H1 (cell line): ENCODE measurements at regions of chr6 and their contacts with region 1.

Region 1: DNA sequence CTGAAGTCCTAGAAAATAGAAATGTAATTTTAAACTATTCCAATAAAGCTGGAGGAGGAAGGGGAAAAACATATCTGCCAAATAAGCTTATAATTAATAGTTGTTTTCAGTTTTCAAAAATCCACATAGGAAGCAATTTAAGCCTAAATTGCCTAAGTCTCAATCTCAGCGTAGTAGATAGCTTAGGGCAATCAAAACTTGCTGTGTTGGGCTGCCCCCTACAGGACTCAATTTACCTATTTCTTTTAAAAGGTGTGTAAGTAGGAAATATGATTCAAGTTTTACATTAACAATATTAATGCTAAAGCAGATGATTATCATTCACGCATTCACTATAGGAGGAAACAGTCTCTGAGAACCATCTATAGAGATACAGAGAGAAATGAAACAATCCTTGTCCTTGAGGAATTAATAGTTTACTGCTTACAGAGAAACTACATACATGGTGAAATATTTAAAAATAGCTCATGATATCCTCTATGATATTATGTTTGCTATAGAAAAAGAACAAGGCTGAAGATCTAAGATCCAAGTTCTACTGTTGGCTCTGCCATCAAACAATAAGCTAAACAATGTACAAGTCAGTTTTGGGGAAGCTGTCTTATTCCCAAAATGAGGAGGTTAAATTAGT is 102.1 kb downstream of the ATG5 start:
- DNase-seq: no peak
- H3K4me3 ChIP-seq: no peak overlapping the region
- H3K27ac ChIP-seq: no peak overlapping the region
- H3K4me1 ChIP-seq: no peaks in the 10 kb centered on the region
- H3K27me3 ChIP-seq: no peaks in the 10 kb centered on the region
- CTCF ChIP-seq: peak in 2 of 3 experiments; percentile 53 to 68; a peak in 3 of 4 replicates
- EP300 ChIP-seq: no peak
- POLR2A ChIP-seq: no peak
- RAD21 ChIP-seq: peak; percentile 84

Region 2: GRCh38 chr6:105431226-105431625 is 792.2 kb before region 1 on chr6:
- CTCF ChIA-PET with region 1: interaction called, 14 read pairs
- POLR2A ChIA-PET with region 1: no interaction called
- DNase-seq: no peak
- H3K4me3 ChIP-seq: no peak overlapping the region
- H3K27ac ChIP-seq: no peak overlapping the region
- H3K4me1 ChIP-seq: peaks cover 0 to 3% (median 0%) of the 10 kb centered on the region in 4 experiments; a peak in 1 of 7 replicates
- H3K27me3 ChIP-seq: no peaks in the 10 kb centered on the region
- CTCF ChIP-seq: peak in 2 of 3 experiments; percentile 43 to 44; a peak in 2 of 4 replicates
- EP300 ChIP-seq: no peak
- POLR2A ChIP-seq: no peak
- RAD21 ChIP-seq: peak; percentile 68 to 70

Region 3: DNA sequence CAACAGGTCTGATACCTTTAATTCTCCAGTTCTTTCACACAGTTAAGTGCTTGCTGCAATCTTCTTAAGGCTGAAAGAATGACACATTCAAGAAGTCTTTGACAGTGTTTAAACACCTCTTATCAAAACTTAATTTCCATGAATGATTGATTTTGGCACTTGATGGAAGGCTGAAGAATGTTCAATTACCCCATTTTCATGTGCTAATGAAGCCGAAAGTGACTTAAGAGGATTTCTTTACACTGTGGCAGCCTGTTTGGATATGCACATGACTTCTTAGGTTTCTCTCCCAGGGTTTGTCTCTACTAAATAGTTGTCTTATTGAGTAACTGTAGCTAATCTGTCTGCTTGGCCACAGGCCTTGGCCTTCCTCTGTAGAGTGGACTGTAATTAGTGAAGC is 218.4 kb before region 1 on chr6:
- CTCF ChIA-PET with region 1: no interaction called
- POLR2A ChIA-PET with region 1: no interaction called
- DNase-seq: no peak
- H3K4me3 ChIP-seq: no peak overlapping the region
- H3K27ac ChIP-seq: no peak overlapping the region
- H3K4me1 ChIP-seq: peaks cover 2 to 17% (median 9%) of the 10 kb centered on the region in 4 experiments; a peak in 6 of 7 replicates
- H3K27me3 ChIP-seq: peaks cover 0 to 1% (median 0%) of the 10 kb centered on the region in 4 experiments; a peak in 3 of 7 replicates
- CTCF ChIP-seq: no peak
- EP300 ChIP-seq: no peak
- POLR2A ChIP-seq: no peak
- RAD21 ChIP-seq: no peak

Region 4: DNA sequence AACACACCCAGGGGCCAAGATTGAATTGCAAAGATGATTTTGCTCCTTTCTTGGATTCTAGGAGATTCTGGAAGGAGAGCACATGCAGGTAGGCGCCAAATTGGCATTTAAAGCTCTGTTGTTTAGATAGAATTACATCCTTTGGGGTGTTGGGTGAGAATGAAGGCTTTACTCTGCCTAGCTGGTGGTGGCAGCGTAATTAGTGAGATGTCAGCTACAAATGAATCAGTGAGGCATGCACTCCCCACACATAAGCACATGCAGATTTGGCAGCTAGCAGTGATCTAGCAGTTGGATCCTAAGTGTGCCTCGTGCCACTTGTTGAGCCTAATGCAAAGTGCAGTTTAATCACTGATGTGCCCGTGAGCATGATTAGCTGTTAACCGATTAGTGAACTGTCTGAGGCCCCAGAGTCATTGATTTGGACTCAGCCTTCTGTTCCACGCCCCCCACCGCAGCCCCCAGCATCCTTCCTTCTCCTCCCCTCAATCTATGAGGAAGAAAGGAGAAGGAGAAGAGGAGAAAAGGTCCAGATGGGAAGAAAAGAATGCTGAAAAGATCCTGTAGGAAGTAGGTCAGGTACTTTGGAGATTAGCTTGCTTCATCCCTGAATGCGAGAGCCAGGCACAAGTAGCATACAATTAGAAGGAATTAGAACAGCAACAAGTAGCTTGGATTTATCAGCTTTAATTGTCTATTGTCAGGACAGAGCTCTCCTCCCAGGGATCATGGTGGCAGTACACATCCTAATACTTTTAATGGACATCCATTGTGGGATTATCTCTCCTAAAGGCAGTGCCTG is 143.3 kb before region 1 on chr6:
- CTCF ChIA-PET with region 1: interaction called, 10 read pairs
- POLR2A ChIA-PET with region 1: no interaction called
- DNase-seq: no peak
- H3K4me3 ChIP-seq: no peak overlapping the region
- H3K27ac ChIP-seq: no peak overlapping the region
- H3K4me1 ChIP-seq: peaks cover under 1 to 10% (median 3%) of the 10 kb centered on the region in 4 experiments; a peak in 4 of 7 replicates
- H3K27me3 ChIP-seq: peaks cover 0 to under 1% (median 0%) of the 10 kb centered on the region in 4 experiments; a peak in 2 of 7 replicates
- CTCF ChIP-seq: no peak
- EP300 ChIP-seq: no peak
- POLR2A ChIP-seq: no peak
- RAD21 ChIP-seq: no peak

Region 5: DNA sequence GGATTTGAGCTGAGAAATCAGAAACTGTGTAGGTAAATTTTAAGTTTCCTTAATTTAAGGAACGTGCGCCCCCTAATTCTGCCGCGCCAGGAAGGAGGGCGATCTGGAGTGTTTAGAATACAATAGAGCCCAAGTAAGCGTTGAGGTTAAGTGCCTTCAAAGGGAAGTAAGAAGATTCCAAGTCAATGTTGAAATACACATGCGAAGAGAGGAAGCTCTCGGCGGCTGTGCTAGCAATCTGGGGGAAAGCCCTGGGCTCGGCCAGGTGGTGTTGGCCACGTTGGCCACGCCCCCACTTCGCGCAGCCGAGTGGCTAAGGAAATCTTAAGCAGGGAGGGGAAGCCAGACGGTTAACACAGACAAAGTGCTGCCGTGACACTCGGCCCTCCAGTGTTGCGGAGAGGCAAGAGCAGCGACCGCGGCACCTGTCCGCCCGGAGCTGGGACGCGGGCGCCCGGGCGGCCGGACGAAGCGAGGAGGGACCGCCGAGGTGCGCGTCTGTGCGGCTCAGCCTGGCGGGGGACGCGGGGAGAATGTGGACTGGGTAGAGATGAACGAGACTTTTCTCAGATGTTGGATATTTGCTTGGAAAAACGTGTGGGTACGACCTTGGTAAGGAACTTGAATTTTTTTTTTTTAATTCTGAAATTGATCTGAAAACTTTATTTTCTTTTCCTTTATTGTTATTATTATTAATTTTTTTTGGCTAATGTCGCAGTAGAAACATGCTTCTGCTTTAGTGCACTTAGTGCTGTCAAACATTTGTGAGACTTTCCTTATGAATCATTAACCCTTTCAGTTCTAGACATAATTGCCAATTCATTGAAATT is 137.2 kb before region 1 on chr6 and contains the start of gene PRDM1:
- CTCF ChIA-PET with region 1: interaction called, 18 read pairs
- POLR2A ChIA-PET with region 1: no interaction called
- DNase-seq: peak; percentile 44 to 82
- H3K4me3 ChIP-seq: peak within 1 kb of the TSS; percentile 42 to 68 (median 65)
- H3K27ac ChIP-seq: no peak within 1 kb of the TSS
- H3K4me1 ChIP-seq: peaks cover 5 to 16% (median 10%) of the 10 kb centered on the region in 4 experiments; a peak in 6 of 7 replicates
- H3K27me3 ChIP-seq: peaks cover 0 to 20% (median 3%) of the 10 kb centered on the region in 4 experiments; a peak in 3 of 7 replicates
- CTCF ChIP-seq: peak; percentile 25 to 45 (median 45); a peak in 3 of 4 replicates
- EP300 ChIP-seq: no peak
- POLR2A ChIP-seq: no peak
- RAD21 ChIP-seq: peak; percentile 52 to 65
- total RNA-seq, gene PRDM1: 0.74 and 1.1 TPM in 2 replicates

Region 6: GRCh38 chr6:106141441-106142237 is 81.8 kb before region 1 on chr6:
- CTCF ChIA-PET with region 1: interaction called, 40 read pairs
- POLR2A ChIA-PET with region 1: no interaction called
- DNase-seq: no peak
- H3K4me3 ChIP-seq: no peak overlapping the region
- H3K27ac ChIP-seq: no peak overlapping the region
- H3K4me1 ChIP-seq: peaks cover 0 to 8% (median 7%) of the 10 kb centered on the region in 4 experiments; a peak in 4 of 7 replicates
- H3K27me3 ChIP-seq: peaks cover 0 to 1% (median 0%) of the 10 kb centered on the region in 4 experiments; a peak in 1 of 7 replicates
- CTCF ChIP-seq: no peak
- EP300 ChIP-seq: no peak
- POLR2A ChIP-seq: no peak
- RAD21 ChIP-seq: no peak

Region 7: DNA sequence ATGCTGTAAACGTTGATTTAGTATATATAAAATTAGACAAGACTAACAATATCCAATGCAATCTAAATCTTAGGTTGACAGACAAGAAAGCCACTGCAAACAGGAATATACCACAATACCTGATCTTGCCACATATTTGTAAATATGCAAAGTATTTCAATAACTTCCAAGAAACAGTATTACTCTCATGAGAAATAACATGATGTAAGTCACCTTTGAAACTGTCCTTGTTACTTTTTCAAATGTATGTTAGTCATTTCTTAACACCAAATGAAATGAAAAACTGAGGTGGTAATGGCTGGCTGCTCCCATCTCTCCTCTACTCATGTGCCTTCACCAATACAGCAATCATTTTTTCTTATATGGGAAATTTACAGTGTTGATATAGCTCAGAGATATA is 16.5 kb before region 1 on chr6:
- CTCF ChIA-PET with region 1: interaction called, 13 read pairs
- POLR2A ChIA-PET with region 1: no interaction called
- DNase-seq: no peak
- H3K4me3 ChIP-seq: no peak overlapping the region
- H3K27ac ChIP-seq: no peak overlapping the region
- H3K4me1 ChIP-seq: no peaks in the 10 kb centered on the region; a peak in 1 of 7 replicates
- H3K27me3 ChIP-seq: no peaks in the 10 kb centered on the region
- CTCF ChIP-seq: no peak
- EP300 ChIP-seq: no peak
- POLR2A ChIP-seq: no peak
- RAD21 ChIP-seq: no peak

Region 8: DNA sequence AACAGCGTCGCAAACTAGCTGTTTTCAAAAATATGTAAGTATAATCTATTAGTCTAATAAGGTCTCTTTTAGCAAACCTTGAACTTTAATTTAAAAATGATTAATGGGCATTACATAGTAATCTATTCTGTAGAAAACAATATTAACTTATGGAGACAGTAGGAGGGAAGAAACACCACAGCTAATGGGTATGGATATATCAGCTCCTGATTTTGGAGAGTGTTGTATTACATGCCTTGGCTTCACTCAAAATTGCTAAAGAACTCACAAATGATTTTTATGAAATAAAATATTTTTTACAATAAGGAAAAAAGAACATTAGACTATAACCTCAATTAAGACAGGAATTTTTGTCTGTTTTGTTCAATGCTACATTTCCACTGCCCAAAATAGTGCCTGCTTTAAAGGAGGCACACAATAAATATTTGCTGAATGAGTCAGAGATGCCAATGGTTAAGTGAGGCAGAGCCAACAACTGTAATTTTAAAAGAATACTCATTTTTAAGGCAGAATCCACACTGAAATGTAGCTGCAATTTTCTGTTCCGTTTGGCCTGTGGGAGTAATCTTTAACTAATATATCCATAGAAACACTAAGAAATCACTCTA is 86.5 kb after region 1 on chr6:
- CTCF ChIA-PET with region 1: no interaction called
- POLR2A ChIA-PET with region 1: no interaction called
- DNase-seq: no peak
- H3K4me3 ChIP-seq: no peak overlapping the region
- H3K27ac ChIP-seq: no peak overlapping the region
- H3K4me1 ChIP-seq: no peaks in the 10 kb centered on the region
- H3K27me3 ChIP-seq: no peaks in the 10 kb centered on the region
- CTCF ChIP-seq: no peak
- EP300 ChIP-seq: no peak
- POLR2A ChIP-seq: no peak
- RAD21 ChIP-seq: no peak